ENCODE measurements at regions of chr5 and their contacts with region 1.

Region 1: GRCh38 chr5:53089345-53089991 is 20.1 kb downstream of the MOCS2 start:
- DNase-seq: no peak
- H3K4me3 Mint-ChIP-seq: peak overlapping the region; percentile 14
- H3K27ac Mint-ChIP-seq: peak overlapping the region; percentile 5
- H3K4me1 Mint-ChIP-seq: peaks cover 24% of the 10 kb centered on the region
- H3K27me3 Mint-ChIP-seq: no peaks in the 10 kb centered on the region

Region 2: GRCh38 chr5:52564587-52564986 is 524.9 kb before region 1 on chr5:
- CTCF ChIA-PET with region 1: no interaction called
- POLR2A ChIA-PET with region 1: no interaction called
- intact Hi-C with region 1: no loop called
- DNase-seq: no peak
- H3K4me3 Mint-ChIP-seq: no peak overlapping the region
- H3K27ac Mint-ChIP-seq: no peak overlapping the region
- H3K4me1 Mint-ChIP-seq: no peaks in the 10 kb centered on the region
- H3K27me3 Mint-ChIP-seq: peaks cover 7% of the 10 kb centered on the region

Region 3: DNA sequence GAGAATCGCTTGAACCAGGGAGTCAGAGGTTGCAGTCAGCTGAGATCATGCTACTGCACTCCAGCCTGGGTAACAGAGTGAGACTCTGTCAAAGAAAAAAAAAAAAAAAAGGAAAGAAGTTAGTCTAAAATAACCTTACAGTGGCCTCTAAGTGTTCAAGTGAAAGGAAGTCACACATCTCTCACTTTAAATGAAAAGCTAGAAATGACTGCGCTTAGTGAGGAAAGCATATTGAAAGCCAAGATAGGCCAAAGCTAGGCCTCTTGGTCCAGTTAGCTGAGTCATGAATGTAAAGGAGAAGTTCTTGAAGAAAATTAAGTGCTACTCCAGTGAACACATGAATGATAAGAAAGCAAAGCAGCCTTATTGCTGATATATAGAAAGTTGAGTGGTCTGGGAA is 263.6 kb before region 1 on chr5:
- CTCF ChIA-PET with region 1: no interaction called
- POLR2A ChIA-PET with region 1: no interaction called
- intact Hi-C with region 1: no loop called
- DNase-seq: no peak
- H3K4me3 Mint-ChIP-seq: no peak overlapping the region
- H3K27ac Mint-ChIP-seq: no peak overlapping the region
- H3K4me1 Mint-ChIP-seq: peaks cover 8% of the 10 kb centered on the region
- H3K27me3 Mint-ChIP-seq: no peaks in the 10 kb centered on the region

Region 4: DNA sequence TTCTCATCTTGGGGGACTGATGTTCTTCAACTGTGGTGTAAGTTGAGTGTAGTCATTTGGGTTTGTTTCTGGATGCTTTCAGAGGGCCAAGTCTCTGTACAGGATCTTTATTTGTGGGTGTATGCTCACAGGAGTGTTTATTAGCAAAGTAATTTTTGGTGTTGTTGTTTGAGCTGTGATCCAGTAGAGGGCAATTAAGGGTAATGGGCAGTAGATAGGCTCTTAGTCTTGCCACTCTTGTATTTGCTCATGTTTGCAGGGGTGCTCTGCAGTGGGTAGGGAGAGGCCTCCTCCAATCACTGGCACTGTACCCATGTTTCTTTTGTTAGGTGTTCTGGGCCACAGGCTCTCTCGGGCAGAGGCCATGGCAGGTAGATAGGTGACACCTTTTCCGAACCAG is 146.2 kb before region 1 on chr5:
- CTCF ChIA-PET with region 1: interaction called, 194 read pairs
- POLR2A ChIA-PET with region 1: interaction called, 5 read pairs
- intact Hi-C with region 1: no loop called
- DNase-seq: no peak
- H3K4me3 Mint-ChIP-seq: no peak overlapping the region
- H3K27ac Mint-ChIP-seq: no peak overlapping the region
- H3K4me1 Mint-ChIP-seq: peaks cover 5% of the 10 kb centered on the region
- H3K27me3 Mint-ChIP-seq: no peaks in the 10 kb centered on the region

Region 5: GRCh38 chr5:53035868-53036381 is 53.5 kb before region 1 on chr5:
- CTCF ChIA-PET with region 1: interaction called, 21 read pairs
- POLR2A ChIA-PET with region 1: interaction called, 3 read pairs
- intact Hi-C with region 1: loop called (anchors 1 kb)
- DNase-seq: no peak
- H3K4me3 Mint-ChIP-seq: no peak overlapping the region
- H3K27ac Mint-ChIP-seq: no peak overlapping the region
- H3K4me1 Mint-ChIP-seq: peaks cover 38% of the 10 kb centered on the region
- H3K27me3 Mint-ChIP-seq: peaks cover 5% of the 10 kb centered on the region

Region 6: DNA sequence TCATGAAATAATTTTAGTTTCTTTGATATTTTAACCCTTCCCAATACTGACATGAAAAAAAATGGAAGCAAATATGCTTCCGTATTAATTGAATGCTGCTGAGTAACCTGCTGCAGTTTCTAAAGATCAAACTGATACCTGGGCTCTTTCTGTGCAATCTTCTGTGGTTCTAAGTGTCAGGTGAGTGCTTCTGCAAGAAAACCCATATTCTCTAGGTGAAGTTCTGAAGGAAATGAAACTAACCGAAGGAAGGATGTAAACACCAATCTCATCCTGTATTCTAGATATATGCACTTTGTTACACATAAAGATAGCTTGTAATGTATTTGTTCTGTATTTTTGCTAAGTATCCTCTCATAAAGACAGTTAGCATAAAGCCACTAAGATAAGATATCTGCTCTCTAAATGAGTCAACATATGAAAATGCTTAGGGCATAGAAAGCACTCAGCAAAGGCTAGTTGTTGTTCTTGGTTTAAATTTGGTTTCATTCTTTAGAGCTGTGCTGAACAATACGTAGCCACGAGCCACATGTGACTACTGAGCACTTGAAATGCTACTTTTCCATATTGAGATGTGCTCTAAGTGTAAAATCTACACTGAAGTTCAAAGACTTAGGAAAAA is 48.3 kb before region 1 on chr5:
- CTCF ChIA-PET with region 1: interaction called, 21 read pairs
- POLR2A ChIA-PET with region 1: no interaction called
- intact Hi-C with region 1: loop called (anchors 1 kb)
- DNase-seq: peak; percentile 32
- H3K4me3 Mint-ChIP-seq: peak overlapping the region; percentile 25
- H3K27ac Mint-ChIP-seq: no peak overlapping the region
- H3K4me1 Mint-ChIP-seq: peaks cover 42% of the 10 kb centered on the region
- H3K27me3 Mint-ChIP-seq: peaks cover 7% of the 10 kb centered on the region

Region 7: DNA sequence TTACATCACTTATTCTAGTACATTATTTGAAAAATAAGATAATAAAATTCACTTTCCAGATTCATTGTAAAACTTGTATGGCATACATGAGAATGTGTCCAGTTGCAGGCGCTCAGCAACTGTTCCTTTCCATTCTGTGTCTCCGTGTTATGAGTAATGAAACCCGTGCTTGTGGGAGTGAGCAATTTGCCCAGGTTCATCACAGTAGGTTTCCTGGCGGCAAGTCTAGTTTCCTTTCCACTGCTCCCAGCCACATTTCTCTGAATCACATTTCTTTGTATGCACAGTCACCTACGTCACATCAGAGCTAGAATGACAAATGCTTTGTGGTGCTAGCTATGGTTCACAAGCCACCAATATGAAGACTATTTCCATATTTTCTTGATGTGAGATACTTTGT is 19.8 kb before region 1 on chr5:
- CTCF ChIA-PET with region 1: interaction called, 13 read pairs
- POLR2A ChIA-PET with region 1: interaction called, 7 read pairs
- intact Hi-C with region 1: loop called (anchors 1 kb)
- DNase-seq: peak; percentile 86
- H3K4me3 Mint-ChIP-seq: no peak overlapping the region
- H3K27ac Mint-ChIP-seq: peak overlapping the region; percentile 10
- H3K4me1 Mint-ChIP-seq: peaks cover 18% of the 10 kb centered on the region
- H3K27me3 Mint-ChIP-seq: peaks cover 7% of the 10 kb centered on the region